CD8-positive, alpha-beta T cell (primary cell): ENCODE measurements at regions of chr11 and their contacts with region 1.

Region 1: GRCh38 chr11:96284917-96285316 is 58.1 kb downstream of the MAML2 start:
- DNase-seq: no peak
- ATAC-seq: no peak
- H3K4me3 ChIP-seq: no peak overlapping the region
- H3K4me3 Mint-ChIP-seq: no peak overlapping the region
- H3K27ac ChIP-seq: no peak overlapping the region
- H3K27ac Mint-ChIP-seq: peak overlapping the region; percentile 37
- H3K4me1 ChIP-seq: peaks cover 56% of the 10 kb centered on the region
- H3K4me1 Mint-ChIP-seq: peaks cover 81% of the 10 kb centered on the region
- H3K27me3 ChIP-seq: no peaks in the 10 kb centered on the region
- H3K27me3 Mint-ChIP-seq: no peaks in the 10 kb centered on the region
- CTCF ChIP-seq: no peak

Region 2: DNA sequence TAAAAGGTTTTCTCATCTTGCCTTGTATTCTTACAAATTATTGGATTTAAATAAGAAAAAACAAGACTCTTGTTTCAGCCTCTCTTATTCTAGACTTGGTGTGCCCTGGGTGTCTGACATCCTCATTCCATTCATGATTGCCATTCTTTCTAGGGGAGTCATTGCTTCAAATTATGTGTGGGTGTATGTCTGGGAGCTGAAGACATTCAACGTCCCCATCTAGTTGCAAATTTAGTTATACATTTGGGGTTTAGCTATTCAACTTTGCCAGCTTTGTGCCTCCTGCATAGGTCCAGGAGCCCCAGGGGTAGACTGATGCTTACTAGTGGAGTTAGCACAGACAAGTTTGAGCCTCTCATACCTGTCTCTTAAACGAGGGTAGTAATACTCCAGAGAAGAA is 40.0 kb after region 1 on chr11:
- CTCF ChIA-PET with region 1: no interaction called
- POLR2A ChIA-PET with region 1: no interaction called
- intact Hi-C with region 1: loop called in 1 of 2 experiments (anchors 5 kb)
- DNase-seq: no peak
- ATAC-seq: no peak
- H3K4me3 ChIP-seq: no peak overlapping the region
- H3K4me3 Mint-ChIP-seq: no peak overlapping the region
- H3K27ac ChIP-seq: no peak overlapping the region
- H3K27ac Mint-ChIP-seq: peak overlapping the region; percentile 38
- H3K4me1 ChIP-seq: peaks cover 46% of the 10 kb centered on the region
- H3K4me1 Mint-ChIP-seq: peaks cover 81% of the 10 kb centered on the region
- H3K27me3 ChIP-seq: no peaks in the 10 kb centered on the region
- H3K27me3 Mint-ChIP-seq: no peaks in the 10 kb centered on the region
- CTCF ChIP-seq: no peak